ENCODE measurements at regions of chr2 and their contacts with region 1.

Region 1: DNA sequence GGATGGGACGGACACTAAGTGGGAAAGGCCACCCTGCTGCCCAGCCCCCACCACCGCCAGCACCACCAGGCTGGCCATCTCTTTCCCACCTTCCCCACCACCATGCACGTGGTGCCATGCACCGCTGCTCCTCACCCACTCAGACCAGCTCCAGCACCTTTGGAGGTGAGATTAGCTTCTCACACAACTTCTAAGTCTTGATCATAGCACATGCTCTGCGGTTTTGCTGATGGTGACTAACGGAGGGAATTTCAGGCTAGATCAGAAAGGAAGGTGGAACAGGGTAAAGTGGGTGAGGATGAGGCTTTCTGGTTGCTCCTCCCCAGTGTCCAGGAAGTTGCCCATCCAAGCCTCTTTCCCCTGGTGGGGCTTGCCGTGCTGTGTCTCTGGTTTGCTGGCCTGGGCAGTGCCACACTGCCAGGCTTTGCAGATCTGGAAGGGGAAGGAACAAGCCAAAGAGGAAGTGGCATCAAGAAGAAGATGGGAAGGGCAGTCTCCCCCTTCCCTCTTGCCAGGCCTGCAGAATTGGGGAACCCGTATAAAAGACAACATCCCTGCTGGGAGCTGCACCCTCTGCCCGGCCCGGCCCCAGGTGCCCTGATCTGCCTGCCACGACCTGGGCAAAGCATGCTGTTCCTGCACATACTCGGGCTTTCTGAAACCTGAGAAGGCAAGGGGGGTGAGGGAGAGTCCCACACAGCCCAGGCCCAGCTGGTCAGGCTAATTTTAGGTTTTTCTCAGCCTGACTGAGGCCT is 44.3 kb upstream of the CAB39 start:
- DNase-seq: peak; percentile 80 to 94 (median 83)
- H3K4me3 ChIP-seq: peak overlapping the region in 1 of 3 experiments; percentile 51
- H3K4me3 Mint-ChIP-seq: peak overlapping the region; percentile 49 to 78
- H3K27ac ChIP-seq: peak overlapping the region; percentile 90 to 93
- H3K27ac Mint-ChIP-seq: peak overlapping the region; percentile 93 to 98 (median 96)
- H3K4me1 ChIP-seq: peaks cover 69 to 76% of the 10 kb centered on the region in 2 donors
- H3K4me1 Mint-ChIP-seq: peaks cover 79% of the 10 kb centered on the region
- H3K27me3 ChIP-seq: no peaks in the 10 kb centered on the region
- H3K27me3 Mint-ChIP-seq: peaks cover 2 to 7% (median 5%) of the 10 kb centered on the region in 3 donors
- CTCF ChIP-seq: no peak

Region 2: GRCh38 chr2:230712443-230713330 is 44.3 kb after region 1 on chr2 and contains the start of gene CAB39:
- intact Hi-C with region 1: loop called (anchors 5 kb)
- DNase-seq: peak; percentile 95 to 96 (median 96)
- H3K4me3 ChIP-seq: peak within 1 kb of the TSS; percentile 77 to 97 (median 81)
- H3K4me3 Mint-ChIP-seq: peak within 1 kb of the TSS; percentile 95 to 99
- H3K27ac ChIP-seq: peak within 1 kb of the TSS; percentile 69 to 93
- H3K27ac Mint-ChIP-seq: peak within 1 kb of the TSS; percentile 90 to 98 (median 95)
- H3K4me1 ChIP-seq: peaks cover 52 to 71% of the 10 kb centered on the region in 2 donors
- H3K4me1 Mint-ChIP-seq: peaks cover 69% of the 10 kb centered on the region
- H3K27me3 ChIP-seq: no peaks in the 10 kb centered on the region
- H3K27me3 Mint-ChIP-seq: peaks cover 3 to 5% (median 3%) of the 10 kb centered on the region in 3 donors
- CTCF ChIP-seq: peak; percentile 84
- polyA plus RNA-seq, gene CAB39: 33.1 to 53.8 (median 38.3) TPM

Region 3: GRCh38 chr2:230793572-230794359 is 125.4 kb after region 1 on chr2:
- intact Hi-C with region 1: loop called (anchors 5 to 10 kb)
- DNase-seq: peak; percentile 93 to 98 (median 98)
- H3K4me3 ChIP-seq: peak overlapping the region in 1 of 3 experiments; percentile 5
- H3K4me3 Mint-ChIP-seq: peak overlapping the region; percentile 35 to 75
- H3K27ac ChIP-seq: peak overlapping the region; percentile 81 to 98
- H3K27ac Mint-ChIP-seq: peak overlapping the region; percentile 94 to 98 (median 97)
- H3K4me1 ChIP-seq: peaks cover 53 to 63% of the 10 kb centered on the region in 2 donors
- H3K4me1 Mint-ChIP-seq: peaks cover 57% of the 10 kb centered on the region
- H3K27me3 ChIP-seq: no peaks in the 10 kb centered on the region
- H3K27me3 Mint-ChIP-seq: peaks cover 0 to 3% (median 0%) of the 10 kb centered on the region in 3 donors
- CTCF ChIP-seq: no peak

Region 4: DNA sequence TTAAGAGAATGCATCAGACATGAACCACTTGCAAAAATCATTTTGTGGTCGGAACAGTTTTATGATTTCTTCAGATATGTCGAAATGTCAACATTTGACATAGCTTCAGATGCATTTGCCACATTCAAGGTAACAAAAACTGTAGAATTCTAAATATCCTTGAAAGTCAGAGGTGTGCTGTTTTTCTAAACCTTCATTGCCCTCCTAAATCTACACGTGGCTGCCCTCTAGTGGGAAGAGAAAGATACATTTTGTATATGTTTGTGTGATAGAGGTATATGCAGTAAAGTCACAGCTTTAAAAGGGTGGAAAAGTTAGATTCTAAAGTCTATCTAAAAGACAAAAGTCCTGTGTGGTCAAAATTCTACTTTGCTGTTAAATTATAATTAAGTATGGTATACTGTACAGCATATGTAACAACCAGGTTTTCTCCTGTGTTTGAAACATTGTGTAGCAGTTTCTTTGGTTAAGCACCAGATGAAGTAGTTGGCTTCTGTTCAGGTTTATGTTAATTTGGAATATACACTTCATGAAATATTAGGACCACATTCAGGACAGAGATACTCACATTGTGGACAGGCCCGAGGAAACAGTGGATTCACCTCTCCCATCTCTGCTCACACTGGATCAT is 130.5 kb after region 1 on chr2:
- intact Hi-C with region 1: loop called (anchors 5 to 10 kb)
- DNase-seq: peak; percentile 30 to 53 (median 44)
- H3K4me3 ChIP-seq: no peak overlapping the region
- H3K4me3 Mint-ChIP-seq: no peak overlapping the region
- H3K27ac ChIP-seq: peak overlapping the region in 1 of 2 donors; percentile 98
- H3K27ac Mint-ChIP-seq: peak overlapping the region in 1 of 7 donors; percentile 21
- H3K4me1 ChIP-seq: peaks cover 43 to 48% of the 10 kb centered on the region in 2 donors
- H3K4me1 Mint-ChIP-seq: peaks cover 27% of the 10 kb centered on the region
- H3K27me3 ChIP-seq: no peaks in the 10 kb centered on the region
- H3K27me3 Mint-ChIP-seq: peaks cover 0 to under 1% (median 0%) of the 10 kb centered on the region in 3 donors
- CTCF ChIP-seq: peak; percentile 80

Measured in CD14-positive monocyte (primary cell).